Astrocyte of the spinal cord (primary cell): ENCODE measurements at regions of chr18 and their contacts with region 1.

Region 1: DNA sequence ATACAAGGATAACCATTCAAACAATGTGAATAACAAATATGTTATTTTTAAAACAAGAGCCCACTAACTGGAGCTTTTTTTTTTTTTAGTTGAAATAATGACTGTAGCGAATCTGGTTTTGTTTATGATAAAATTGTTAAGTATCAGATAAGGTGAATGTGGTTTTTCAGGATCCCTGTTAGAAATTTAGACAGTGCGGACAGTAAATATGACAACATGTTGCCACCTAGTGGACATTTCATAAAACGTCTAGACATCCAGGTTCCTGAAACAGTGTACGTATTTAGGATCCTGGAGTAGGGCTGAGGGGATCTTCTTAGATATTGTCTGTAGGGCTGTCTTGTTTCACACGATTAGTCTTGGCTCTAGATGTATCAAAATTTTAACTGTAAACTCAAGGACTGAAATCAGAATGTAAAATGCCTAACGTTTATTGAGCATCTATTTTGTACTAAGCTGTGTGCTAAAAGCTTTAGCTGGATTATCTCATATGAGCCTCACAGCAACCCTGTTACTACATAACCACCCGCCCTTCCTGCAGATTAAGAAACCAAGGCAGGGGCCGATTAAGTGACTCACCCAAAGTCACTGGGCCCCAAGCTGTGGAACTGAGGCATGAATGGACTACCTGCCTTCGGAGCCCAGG is 23.9 kb upstream of the CCDC68 start:
- DNase-seq: peak; percentile 75
- H3K4me3 ChIP-seq: no peak overlapping the region
- CTCF ChIP-seq: peak; percentile 54

Region 2: GRCh38 chr18:54679318-54680149 is 303.6 kb before region 1 on chr18:
- in situ Hi-C with region 1: loop called (anchors 25 kb)
- DNase-seq: peak; percentile 89
- H3K4me3 ChIP-seq: no peak overlapping the region
- CTCF ChIP-seq: peak; percentile 56

Region 3: DNA sequence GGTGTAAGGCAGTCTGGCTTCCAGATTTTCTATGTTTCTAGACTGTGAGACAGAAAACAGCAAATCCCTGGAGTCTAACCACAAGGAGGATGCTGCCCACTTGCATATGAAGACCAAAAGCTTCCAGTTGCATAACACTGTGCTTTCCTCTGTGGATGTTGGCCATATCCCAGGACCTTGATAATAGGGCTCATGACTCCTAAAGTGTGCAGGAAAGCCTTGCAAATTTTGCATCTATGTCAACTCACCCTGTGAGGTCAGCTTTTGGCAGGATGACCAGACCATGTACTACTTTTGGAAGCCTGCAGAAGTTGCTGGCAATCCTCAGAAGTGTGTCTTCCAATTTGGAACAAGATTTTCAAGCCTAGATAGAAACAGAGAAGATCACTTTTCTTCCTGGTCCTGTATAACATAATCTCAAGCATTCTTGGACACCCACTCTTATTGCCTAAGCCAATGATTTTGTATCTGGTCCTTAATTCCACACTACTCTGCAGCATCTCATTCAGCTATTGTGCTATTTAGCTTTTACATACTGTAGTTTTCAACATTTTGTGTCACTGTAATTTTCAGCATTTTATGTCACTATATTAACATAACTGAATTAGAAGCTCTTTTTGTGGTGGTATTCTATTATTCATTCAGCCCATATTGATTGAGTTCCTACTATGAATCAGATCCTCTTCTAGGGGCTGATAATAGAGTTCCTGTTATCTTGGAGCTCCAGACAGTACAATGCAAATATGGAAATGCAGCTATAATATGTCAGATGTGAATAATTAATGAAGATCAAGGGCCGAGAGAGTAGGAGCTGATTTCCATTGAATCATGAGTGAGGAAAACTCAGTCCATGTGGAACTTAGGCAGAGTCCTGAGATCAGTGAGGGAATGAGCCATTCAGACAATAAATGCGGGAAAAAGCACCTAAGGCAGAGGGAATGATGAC is 240.2 kb before region 1 on chr18:
- in situ Hi-C with region 1: no loop called
- DNase-seq: peak; percentile 96
- H3K4me3 ChIP-seq: no peak overlapping the region
- CTCF ChIP-seq: no peak

Region 4: GRCh38 chr18:55289775-55290174 is 306.6 kb after region 1 on chr18:
- in situ Hi-C with region 1: no loop called
- DNase-seq: no peak
- H3K4me3 ChIP-seq: no peak overlapping the region
- CTCF ChIP-seq: no peak